Cardiac septum (tissue), 1 donor: ENCODE measurements at regions of chr12 and their contacts with region 1.

Region 1: DNA sequence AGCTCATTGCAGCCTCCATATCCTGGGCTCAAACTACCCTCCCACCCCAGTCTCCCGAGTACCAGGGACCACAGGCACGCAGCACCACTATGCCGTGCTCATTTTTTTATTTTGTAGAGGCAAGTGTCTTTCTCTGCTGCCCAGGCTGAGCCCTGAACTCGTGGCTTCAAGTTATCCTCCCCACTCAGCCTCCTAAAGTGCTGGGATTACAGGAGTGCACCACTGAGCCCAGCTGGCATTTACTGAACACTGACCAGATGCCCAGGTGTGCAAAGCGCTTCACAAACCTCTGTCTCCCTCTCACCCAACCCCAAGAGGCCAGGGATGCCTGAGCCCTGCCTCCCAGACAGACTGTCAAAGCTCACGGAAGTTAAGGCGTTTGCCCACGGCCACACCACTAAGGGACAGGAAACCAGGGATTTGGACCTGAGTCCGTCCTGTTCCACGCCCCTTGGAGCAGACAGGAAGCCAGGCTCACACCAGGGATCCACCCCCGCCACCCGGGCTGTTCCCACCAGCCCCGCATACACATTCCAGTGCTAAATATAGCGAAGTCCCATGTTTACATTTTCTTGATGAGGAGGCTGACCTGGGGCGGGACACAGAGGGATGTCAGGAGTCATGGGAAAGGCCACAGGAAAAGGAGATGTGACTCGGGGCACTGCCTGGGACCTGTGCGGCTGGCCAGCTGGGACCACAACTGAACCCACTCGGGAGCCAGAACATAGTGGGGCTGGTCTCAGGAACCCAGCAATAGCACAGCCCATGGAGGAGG is 51.2 kb downstream of the TESC start:
- DNase-seq: no peak

Region 2: DNA sequence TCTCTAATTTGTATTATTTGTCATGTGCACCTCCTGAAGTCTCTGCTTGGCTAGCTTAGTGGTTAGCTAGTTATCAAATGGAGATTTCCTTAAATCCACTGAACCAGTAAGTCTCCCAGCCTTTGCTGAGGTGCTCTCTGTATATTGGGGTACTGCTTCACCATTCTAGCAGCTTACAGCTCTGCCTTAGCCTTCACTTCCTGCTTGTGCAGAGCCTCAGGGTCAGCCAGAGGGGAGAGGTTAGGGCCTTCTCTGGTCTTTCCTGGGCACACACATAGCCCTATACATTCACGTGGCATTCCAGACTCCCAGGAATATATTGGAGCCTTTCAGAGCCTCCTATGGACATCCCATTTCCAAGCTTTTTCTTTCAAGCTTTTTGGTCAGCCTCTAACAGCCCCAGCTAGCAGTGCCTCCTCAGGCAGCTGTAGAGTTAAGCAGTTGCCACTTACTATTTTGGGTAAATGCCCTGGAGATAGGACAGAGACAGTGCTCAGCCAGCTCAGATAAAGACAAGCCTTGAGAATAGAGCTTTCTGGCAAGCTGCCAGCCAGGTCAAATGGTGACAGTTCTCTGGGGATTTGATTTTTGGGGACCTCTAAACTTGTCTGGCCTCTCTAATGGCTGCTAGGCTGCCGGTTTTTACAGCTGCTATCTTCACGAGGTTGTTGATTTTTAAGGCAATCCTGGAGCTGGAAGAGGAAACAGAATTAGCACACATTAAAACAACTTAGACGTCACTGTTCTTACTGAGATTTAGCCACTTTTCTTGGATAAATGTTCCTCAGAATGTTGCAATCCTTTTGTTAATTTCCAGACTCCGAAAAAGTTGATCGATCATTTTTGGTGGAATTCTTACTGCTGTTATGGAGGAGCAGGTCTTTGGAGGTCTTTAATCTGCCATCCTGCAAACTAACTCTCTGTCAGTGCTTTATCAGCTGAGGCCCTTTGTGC is 104.3 kb before region 1 on chr12:
- intact Hi-C with region 1: no loop called
- DNase-seq: no peak

Region 3: DNA sequence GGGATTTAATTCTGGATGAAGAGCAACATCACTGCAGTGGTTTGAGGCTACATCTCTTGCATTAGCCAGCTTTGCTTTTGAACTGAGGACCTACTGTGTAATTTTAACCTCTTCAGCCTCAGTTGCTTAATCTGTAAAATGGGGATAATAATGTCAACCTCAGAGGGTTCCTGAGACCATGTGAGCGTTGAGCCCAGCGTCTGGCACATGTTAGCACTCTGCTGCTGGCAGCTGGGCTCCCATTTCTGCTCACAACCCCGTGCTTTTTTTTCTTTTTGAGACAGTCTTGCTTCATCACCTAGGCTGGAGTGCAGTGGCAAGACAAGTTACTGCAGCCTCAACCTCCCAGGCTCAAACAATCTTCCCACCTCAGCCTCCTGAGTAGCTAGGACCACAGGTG is 19.6 kb after region 1 on chr12:
- intact Hi-C with region 1: loop called (anchors 1 kb)
- DNase-seq: no peak

Region 4: GRCh38 chr12:117098361-117099217 is 50.6 kb after region 1 on chr12:
- intact Hi-C with region 1: loop called (anchors 5 kb)
- DNase-seq: no peak

Region 5: DNA sequence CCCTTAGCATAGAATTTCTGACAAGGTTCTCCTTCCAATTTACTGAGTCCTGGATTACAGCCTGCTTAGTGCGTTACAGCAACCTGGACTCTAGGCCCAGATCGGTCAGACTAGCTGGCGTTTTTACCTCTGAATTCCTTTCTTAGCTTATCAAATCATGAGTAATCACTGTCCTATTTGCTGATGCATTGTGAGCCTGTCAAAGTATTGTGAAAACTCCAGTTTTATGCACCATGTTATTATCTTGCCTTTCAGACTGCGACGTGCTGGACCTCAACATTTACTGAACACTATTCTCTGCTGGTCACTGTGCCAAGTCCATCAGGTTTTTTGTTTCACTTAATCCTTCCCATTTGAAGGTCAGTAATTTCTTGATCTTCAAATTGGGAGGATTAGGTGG is 110.9 kb after region 1 on chr12:
- intact Hi-C with region 1: no loop called
- DNase-seq: no peak